ENCODE measurements at regions of chr19 and their contacts with region 1.

Region 1: GRCh38 chr19:35195830-35196229 is 32.7 kb downstream of the FAM187B start:
- DNase-seq: no peak
- ATAC-seq: no peak
- H3K4me3 Mint-ChIP-seq: no peak overlapping the region
- H3K27ac Mint-ChIP-seq: no peak overlapping the region
- H3K4me1 Mint-ChIP-seq: peaks cover 8% of the 10 kb centered on the region
- H3K27me3 Mint-ChIP-seq: peaks cover 1% of the 10 kb centered on the region
- CTCF ChIP-seq: no peak

Region 2: DNA sequence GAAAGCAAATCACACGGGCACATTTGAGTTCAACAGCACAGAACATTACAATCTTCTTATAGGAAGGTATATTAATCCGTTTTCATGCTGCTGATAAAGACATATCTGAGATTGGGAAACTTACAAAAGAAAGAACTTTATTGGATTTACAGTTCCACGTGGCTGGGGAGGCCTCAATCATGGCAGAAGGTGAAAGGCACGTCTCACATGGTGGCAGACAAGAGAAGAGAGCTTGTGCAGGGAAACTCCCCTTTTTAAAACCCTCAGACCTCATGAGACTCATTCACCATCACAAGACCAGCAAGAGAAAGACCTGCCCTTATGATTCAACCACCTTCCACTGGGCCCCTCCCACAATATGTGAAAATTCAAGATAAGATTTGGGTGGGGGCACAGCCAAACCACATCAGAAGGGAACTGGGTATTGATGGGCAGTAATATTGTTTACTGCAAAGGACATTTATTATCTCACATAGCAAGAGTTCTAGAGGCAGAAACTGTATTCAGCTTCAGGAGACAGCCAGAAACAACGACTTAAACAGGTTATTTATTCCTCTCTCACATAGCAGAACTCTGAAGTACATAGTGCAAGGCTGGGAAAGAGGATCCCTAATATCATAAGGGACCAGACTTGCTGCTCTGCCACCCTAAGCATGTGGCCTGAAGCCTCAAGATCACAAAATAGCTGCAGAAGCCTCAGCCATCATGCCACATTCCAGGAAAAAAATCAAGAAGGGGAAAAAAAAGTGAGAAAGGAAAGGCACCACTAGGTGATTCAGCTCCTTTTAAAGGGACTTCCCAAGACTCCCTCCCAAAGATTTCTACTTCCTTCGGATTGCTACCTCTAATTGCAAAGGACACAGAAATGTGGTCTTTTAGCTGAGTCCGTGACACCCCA is 18.2 kb before region 1 on chr19:
- CTCF ChIA-PET with region 1: no interaction called
- POLR2A ChIA-PET with region 1: no interaction called
- intact Hi-C with region 1: loop called (anchors 2 kb)
- DNase-seq: no peak
- ATAC-seq: no peak
- H3K4me3 Mint-ChIP-seq: no peak overlapping the region
- H3K27ac Mint-ChIP-seq: no peak overlapping the region
- H3K4me1 Mint-ChIP-seq: peaks cover 3% of the 10 kb centered on the region
- H3K27me3 Mint-ChIP-seq: no peaks in the 10 kb centered on the region
- CTCF ChIP-seq: no peak